ENCODE measurements at regions of chr9 and their contacts with region 1.

Region 1: DNA sequence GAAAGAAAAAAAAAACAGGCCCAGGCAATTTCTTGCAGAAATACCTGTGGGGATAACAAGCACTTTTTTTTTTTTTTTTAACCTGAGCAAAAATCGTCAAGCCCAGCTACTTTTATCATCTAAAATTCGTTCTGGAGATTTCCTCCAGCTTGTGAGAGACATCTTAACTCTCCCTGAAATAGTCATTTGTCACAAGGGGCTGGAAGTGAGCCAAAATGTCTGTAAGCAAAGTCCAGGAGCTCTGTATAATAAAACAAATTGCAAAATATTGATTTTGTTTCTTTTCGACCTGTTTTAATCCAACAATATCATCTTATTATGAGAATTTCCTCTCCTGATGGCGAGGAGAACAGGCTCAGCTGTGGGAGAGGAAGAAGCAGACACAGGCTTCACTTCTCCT is 168.4 kb downstream of the TTLL11 start:
- DNase-seq: no peak
- H3K4me3 ChIP-seq: no peak overlapping the region
- H3K27me3 ChIP-seq: no peaks in the 10 kb centered on the region
- CTCF ChIP-seq: no peak

Region 2: GRCh38 chr9:121071756-121072421 is 852.8 kb before region 1 on chr9:
- CTCF ChIA-PET with region 1: no interaction called
- POLR2A ChIA-PET with region 1: interaction called, 22 read pairs
- DNase-seq: no peak
- H3K4me3 ChIP-seq: peak overlapping the region; percentile 35
- H3K27me3 ChIP-seq: no peaks in the 10 kb centered on the region
- CTCF ChIP-seq: peak; percentile 36

Measured in BJ (cell line).